Right ventricle myocardium superior (tissue), 1 donor: ENCODE measurements at regions of chr14 and their contacts with region 1.

Region 1: DNA sequence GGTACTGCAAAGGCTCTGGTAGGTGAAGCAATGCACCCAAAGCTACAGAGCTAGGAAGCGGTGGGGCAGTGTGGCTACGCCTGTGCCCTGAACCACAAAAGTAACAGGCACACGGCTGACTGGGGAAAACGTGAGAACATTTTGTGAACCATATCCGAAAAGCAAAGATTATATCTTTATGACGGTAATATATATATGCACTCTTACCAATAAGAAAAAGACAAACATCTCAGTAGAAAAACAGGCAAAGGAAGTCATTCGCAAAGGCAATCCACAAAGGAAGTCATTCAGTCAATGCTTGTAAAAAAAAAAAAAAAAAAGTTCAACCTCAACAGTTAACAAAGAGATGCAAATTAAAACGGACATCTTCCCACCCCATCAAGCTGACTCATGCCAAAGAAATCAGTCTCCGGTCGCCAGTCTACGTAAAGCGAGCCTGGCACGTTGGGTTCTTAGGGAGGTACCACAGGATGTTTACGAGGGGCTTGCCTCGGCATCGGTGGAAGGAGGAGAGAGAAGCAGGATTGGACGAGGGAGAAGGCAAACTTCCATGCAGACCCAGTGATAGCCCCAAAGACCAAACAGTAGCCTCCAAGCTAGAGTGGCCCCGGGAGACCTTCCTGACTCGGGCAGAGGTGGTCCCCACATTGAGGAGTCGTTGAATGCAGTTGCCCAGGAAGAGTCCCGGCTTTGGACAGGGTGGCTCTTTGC is 39.4 kb upstream of the PPP2R5C start:
- DNase-seq: no peak
- ATAC-seq: peak; percentile 14

Region 2: GRCh38 chr14:101559624-101560533 is 162.2 kb before region 1 on chr14:
- intact Hi-C with region 1: no loop called
- DNase-seq: peak; percentile 57
- ATAC-seq: peak; percentile 87

Region 3: GRCh38 chr14:101758913-101759593 is 36.9 kb after region 1 on chr14:
- intact Hi-C with region 1: loop called (anchors 5 kb)
- DNase-seq: no peak
- ATAC-seq: no peak

Region 4: DNA sequence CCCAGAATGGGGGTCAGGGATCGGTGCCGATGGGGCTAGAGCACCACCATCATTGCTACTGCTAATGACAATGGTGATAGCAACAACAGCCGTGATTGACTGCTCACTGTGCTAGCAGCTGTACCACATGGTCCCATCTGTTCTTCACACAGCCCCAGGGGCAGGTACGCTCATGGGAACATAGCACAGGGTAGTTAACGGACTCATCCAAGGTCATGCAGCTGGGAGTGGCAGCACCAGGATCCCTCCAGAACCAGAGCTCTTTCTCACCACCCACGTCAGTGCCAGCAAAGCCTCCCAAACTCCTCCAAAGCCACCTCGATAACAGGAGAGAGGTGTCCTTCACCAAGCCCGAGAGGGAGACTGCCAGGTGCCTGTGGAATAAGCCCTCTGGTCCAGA is 231.0 kb after region 1 on chr14:
- intact Hi-C with region 1: loop called (anchors 10 kb)
- DNase-seq: no peak
- ATAC-seq: no peak